Gastrocnemius medialis (tissue), 4 donors: ENCODE measurements at regions of chr15 and their contacts with region 1.

Region 1: DNA sequence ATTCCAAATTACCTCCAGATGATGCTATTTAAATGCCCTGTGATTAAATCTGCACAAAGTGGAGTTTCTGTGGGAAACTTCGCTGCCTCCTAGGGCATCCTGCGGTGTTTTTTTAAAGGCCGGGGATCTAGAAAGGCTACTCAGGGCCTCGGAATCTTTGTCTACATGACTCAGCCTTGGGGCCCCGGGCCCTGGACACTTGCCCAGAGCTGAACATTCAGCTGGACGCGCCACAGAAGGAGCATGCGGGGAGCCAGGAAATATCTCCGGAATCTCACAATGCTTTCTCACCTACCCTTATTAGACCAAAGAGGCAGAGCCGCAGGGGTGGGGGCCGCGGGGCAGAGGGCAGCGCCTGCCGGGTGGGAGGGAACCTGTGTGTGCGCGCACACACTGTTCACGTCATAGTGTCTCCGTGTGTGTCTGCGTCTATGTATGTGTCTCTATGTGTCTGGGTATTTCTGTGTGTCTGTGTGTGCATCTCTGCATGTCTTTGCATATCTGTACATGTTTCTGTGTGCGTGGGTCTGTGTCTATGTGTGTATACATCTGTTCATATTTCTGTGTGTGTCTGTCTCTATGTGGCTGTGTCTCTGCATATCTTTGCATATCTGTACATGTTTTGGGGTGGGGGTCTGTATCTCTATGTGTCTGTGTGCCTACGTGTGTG is 145.4 kb upstream of the TPM1 start:
- DNase-seq: peak; percentile 72 to 87
- ATAC-seq: peak; percentile 72 to 86
- H3K4me3 ChIP-seq: peak overlapping the region in 3 of 4 donors; percentile 6 to 30 (median 20)
- H3K27ac ChIP-seq: peak overlapping the region; percentile 23 to 65 (median 38)
- H3K4me1 ChIP-seq: peaks cover 51 to 66% of the 10 kb centered on the region in 2 donors
- H3K27me3 ChIP-seq: no peaks in the 10 kb centered on the region
- CTCF ChIP-seq: no peak
- POLR2A ChIP-seq: no peak

Region 2: GRCh38 chr15:62403164-62403809 is 493.8 kb before region 1 on chr15:
- in situ Hi-C with region 1: no loop called
- intact Hi-C with region 1: loop called (anchors 10 kb)
- DNase-seq: peak in 1 of 2 donors; percentile 48
- ATAC-seq: peak; percentile 77 to 86
- H3K4me3 ChIP-seq: no peak overlapping the region
- H3K27ac ChIP-seq: peak overlapping the region; percentile 18 to 65 (median 60)
- H3K4me1 ChIP-seq: peaks cover 30 to 49% of the 10 kb centered on the region in 2 donors
- H3K27me3 ChIP-seq: no peaks in the 10 kb centered on the region
- CTCF ChIP-seq: no peak
- POLR2A ChIP-seq: no peak

Region 3: GRCh38 chr15:62824111-62825015 is 72.8 kb before region 1 on chr15:
- in situ Hi-C with region 1: no loop called
- intact Hi-C with region 1: no loop called
- DNase-seq: no peak
- ATAC-seq: no peak
- H3K4me3 ChIP-seq: no peak overlapping the region
- H3K27ac ChIP-seq: no peak overlapping the region
- H3K4me1 ChIP-seq: peaks cover 0 to 5% of the 10 kb centered on the region in 2 donors
- H3K27me3 ChIP-seq: no peaks in the 10 kb centered on the region
- CTCF ChIP-seq: no peak
- POLR2A ChIP-seq: no peak

Region 4: DNA sequence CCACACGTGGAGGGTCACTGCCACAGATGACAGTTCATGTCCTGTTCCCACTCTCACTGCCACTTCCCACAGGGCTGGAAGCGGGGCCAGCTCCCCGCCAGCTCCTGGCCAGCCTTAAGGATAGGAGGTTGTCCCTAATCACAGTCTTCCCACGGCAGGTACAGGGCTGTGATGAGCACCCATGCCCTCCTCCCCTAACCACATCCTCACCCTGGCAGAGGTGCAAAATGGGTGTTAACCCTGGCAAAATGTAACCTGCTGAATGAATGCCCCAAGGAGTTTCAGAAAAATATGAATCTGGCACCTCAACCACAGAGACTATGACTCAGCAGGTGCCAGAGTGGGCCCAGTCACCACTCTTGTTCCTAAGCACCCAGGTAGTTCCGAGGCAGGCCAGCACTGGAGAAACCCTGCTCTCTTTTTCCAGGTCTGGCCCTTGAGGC is 39.7 kb before region 1 on chr15:
- in situ Hi-C with region 1: no loop called
- intact Hi-C with region 1: no loop called
- DNase-seq: no peak
- ATAC-seq: no peak
- H3K4me3 ChIP-seq: no peak overlapping the region
- H3K27ac ChIP-seq: no peak overlapping the region
- H3K4me1 ChIP-seq: peaks cover 0 to 6% of the 10 kb centered on the region in 2 donors
- H3K27me3 ChIP-seq: no peaks in the 10 kb centered on the region
- CTCF ChIP-seq: no peak
- POLR2A ChIP-seq: no peak

Region 5: GRCh38 chr15:62880278-62880677 is 16.8 kb before region 1 on chr15:
- in situ Hi-C with region 1: no loop called
- intact Hi-C with region 1: loop called (anchors 2 kb)
- DNase-seq: no peak
- ATAC-seq: peak in 1 of 2 donors; percentile 60
- H3K4me3 ChIP-seq: no peak overlapping the region
- H3K27ac ChIP-seq: no peak overlapping the region
- H3K4me1 ChIP-seq: peaks cover 3 to 21% of the 10 kb centered on the region in 2 donors
- H3K27me3 ChIP-seq: no peaks in the 10 kb centered on the region
- CTCF ChIP-seq: no peak
- POLR2A ChIP-seq: no peak

Region 6: GRCh38 chr15:62940755-62941361 is 43.7 kb after region 1 on chr15:
- in situ Hi-C with region 1: no loop called
- intact Hi-C with region 1: loop called (anchors 5 kb)
- DNase-seq: peak; percentile 87 to 89
- ATAC-seq: peak; percentile 98
- H3K4me3 ChIP-seq: no peak overlapping the region
- H3K27ac ChIP-seq: peak overlapping the region; percentile 84 to 96 (median 86)
- H3K4me1 ChIP-seq: peaks cover 21 to 36% of the 10 kb centered on the region in 2 donors
- H3K27me3 ChIP-seq: no peaks in the 10 kb centered on the region
- CTCF ChIP-seq: no peak
- POLR2A ChIP-seq: no peak

Region 7: GRCh38 chr15:62958528-62959363 is 61.6 kb after region 1 on chr15:
- in situ Hi-C with region 1: no loop called
- intact Hi-C with region 1: loop called (anchors 5 kb)
- DNase-seq: peak; percentile 33 to 75
- ATAC-seq: peak; percentile 91 to 96
- H3K4me3 ChIP-seq: no peak overlapping the region
- H3K27ac ChIP-seq: peak overlapping the region; percentile 21 to 72 (median 49)
- H3K4me1 ChIP-seq: peaks cover 19 to 25% of the 10 kb centered on the region in 2 donors
- H3K27me3 ChIP-seq: no peaks in the 10 kb centered on the region
- CTCF ChIP-seq: no peak
- POLR2A ChIP-seq: no peak

Region 8: DNA sequence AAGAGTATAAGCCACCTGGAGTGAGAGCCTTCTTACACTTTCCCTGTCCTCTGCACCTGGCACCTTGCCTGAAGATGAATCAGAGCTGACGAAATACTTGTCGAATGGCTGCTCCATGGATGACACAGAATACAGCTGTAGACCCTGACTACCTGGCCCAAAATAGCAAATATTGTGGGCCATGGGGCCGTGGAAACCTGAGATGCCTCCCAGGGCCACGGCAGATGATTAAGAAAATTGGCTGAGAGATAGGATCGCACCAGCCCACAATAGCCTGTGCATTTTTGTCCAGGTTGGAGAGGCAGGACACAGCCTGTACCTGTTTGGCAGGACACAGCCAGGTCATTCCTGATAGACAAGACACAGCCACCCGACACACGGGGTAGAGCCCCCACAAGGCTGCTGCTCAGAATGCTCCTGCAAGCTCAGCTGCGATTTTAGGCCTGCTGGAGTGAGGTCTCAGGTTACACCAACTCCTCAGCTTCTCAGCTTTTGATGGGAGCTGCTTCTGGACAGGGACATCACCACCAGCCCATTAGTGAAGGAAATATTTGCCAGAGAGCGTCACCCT is 122.5 kb after region 1 on chr15:
- in situ Hi-C with region 1: no loop called
- intact Hi-C with region 1: loop called (anchors 5 kb)
- DNase-seq: peak; percentile 81 to 93
- ATAC-seq: peak; percentile 91 to 92
- H3K4me3 ChIP-seq: no peak overlapping the region
- H3K27ac ChIP-seq: peak overlapping the region; percentile 75 to 82 (median 77)
- H3K4me1 ChIP-seq: peaks cover 17 to 21% of the 10 kb centered on the region in 2 donors
- H3K27me3 ChIP-seq: no peaks in the 10 kb centered on the region
- CTCF ChIP-seq: no peak
- POLR2A ChIP-seq: no peak

Region 9: GRCh38 chr15:63048115-63048775 is 151.1 kb after region 1 on chr15:
- in situ Hi-C with region 1: no loop called
- intact Hi-C with region 1: loop called (anchors 5 kb)
- DNase-seq: peak; percentile 78 to 86
- ATAC-seq: peak; percentile 75 to 78
- H3K4me3 ChIP-seq: peak overlapping the region; percentile 72 to 94 (median 80)
- H3K27ac ChIP-seq: peak overlapping the region; percentile 86 to 96 (median 91)
- H3K4me1 ChIP-seq: peaks cover 70 to 74% of the 10 kb centered on the region in 2 donors
- H3K27me3 ChIP-seq: peaks cover 0 to 19% (median 0%) of the 10 kb centered on the region in 3 donors
- CTCF ChIP-seq: peak; percentile 97 to 99 (median 98)
- POLR2A ChIP-seq: peak; percentile 61 to 74